ENCODE measurements at regions of chr7 and their contacts with region 1.

Region 1: DNA sequence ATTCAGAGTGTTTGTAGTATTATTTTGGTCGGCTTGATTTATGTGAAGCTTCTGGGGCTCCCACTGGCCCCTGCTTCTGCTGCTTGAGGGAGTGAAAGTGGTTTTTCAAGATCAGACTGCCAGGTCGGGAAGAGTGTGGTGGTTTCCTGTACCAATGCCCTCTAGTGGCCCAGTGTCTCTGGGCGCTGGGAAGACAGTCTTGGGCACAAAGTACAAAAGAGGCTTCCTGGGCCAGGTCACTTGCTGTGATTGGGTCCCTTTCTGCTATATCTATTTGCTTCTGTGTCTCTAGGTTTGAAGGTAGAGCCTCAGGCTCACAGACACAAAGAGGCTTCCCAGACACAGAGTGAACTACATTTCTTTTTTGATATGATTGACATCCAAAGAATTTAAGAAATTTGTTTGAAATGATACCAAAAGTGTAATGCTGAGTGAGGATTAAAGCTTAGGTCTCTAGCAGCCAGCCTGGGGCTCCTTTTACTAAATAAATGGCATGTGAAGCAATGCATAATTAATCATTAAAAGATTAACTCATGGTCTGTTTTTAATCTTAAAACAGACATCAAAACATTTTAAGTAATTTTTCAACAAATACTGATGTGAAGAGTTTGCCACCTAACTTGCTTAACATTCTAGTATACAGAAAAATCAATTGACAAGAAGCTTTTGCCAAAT is 36.3 kb downstream of the ABCB1 start:
- DNase-seq: peak; percentile 25
- H3K4me3 ChIP-seq: no peak overlapping the region
- H3K27ac ChIP-seq: no peak overlapping the region
- H3K4me1 ChIP-seq: no peaks in the 10 kb centered on the region; a peak in 2 of 4 replicates
- H3K27me3 ChIP-seq: no peaks in the 10 kb centered on the region
- CTCF ChIP-seq: peak; percentile 56
- EP300 ChIP-seq: no peak
- RAD21 ChIP-seq: peak; percentile 25; the same call in 1 of the 2 replicates

Region 2: GRCh38 chr7:87574630-87575029 is 10.2 kb after region 1 on chr7:
- CTCF ChIA-PET with region 1: interaction called, 10 read pairs
- POLR2A ChIA-PET with region 1: no interaction called
- DNase-seq: no peak
- H3K4me3 ChIP-seq: no peak overlapping the region
- H3K27ac ChIP-seq: no peak overlapping the region
- H3K4me1 ChIP-seq: peaks cover 0 to 2% of the 10 kb centered on the region in 2 experiments; a peak in 1 of 4 replicates
- H3K27me3 ChIP-seq: no peaks in the 10 kb centered on the region
- CTCF ChIP-seq: no peak
- EP300 ChIP-seq: no peak
- RAD21 ChIP-seq: no peak

Region 3: GRCh38 chr7:87600130-87601124 is 36.0 kb after region 1 on chr7 and contains the start of gene ABCB1:
- CTCF ChIA-PET with region 1: interaction called, 11 read pairs
- POLR2A ChIA-PET with region 1: interaction called, 8 read pairs
- DNase-seq: peak; percentile 91
- H3K4me3 ChIP-seq: peak within 1 kb of the TSS; percentile 68 to 75
- H3K27ac ChIP-seq: peak within 1 kb of the TSS in 1 of 2 experiments; percentile 99; a peak in 2 of 4 replicates
- H3K4me1 ChIP-seq: peaks cover 0 to 25% of the 10 kb centered on the region in 2 experiments; a peak in 2 of 4 replicates
- H3K27me3 ChIP-seq: peaks cover 13% of the 10 kb centered on the region
- CTCF ChIP-seq: no peak
- EP300 ChIP-seq: peak in 1 of 2 experiments; percentile 43; a peak in 2 of 4 replicates
- RAD21 ChIP-seq: peak; percentile 38
- polyA plus RNA-seq, gene ABCB1: 2.0 and 5.3 TPM in 2 replicates

Region 4: GRCh38 chr7:87628780-87629569 is 64.5 kb after region 1 on chr7:
- CTCF ChIA-PET with region 1: no interaction called
- POLR2A ChIA-PET with region 1: no interaction called
- DNase-seq: peak; percentile 74
- H3K4me3 ChIP-seq: peak overlapping the region; percentile 70 to 83
- H3K27ac ChIP-seq: peak overlapping the region in 1 of 2 experiments; percentile 5; a peak in 1 of 4 replicates
- H3K4me1 ChIP-seq: peaks cover 0 to 8% of the 10 kb centered on the region in 2 experiments; a peak in 1 of 4 replicates
- H3K27me3 ChIP-seq: 0 out of 2 replicates have a peak, but pooled peaks cover 11% of the 10 kb centered on the region
- CTCF ChIP-seq: no peak
- EP300 ChIP-seq: no peak
- RAD21 ChIP-seq: no peak

Measured in SK-N-SH (cell line).